Aorta (tissue), 5 donors: ENCODE measurements at regions of chr18 and their contacts with region 1.

Region 1: DNA sequence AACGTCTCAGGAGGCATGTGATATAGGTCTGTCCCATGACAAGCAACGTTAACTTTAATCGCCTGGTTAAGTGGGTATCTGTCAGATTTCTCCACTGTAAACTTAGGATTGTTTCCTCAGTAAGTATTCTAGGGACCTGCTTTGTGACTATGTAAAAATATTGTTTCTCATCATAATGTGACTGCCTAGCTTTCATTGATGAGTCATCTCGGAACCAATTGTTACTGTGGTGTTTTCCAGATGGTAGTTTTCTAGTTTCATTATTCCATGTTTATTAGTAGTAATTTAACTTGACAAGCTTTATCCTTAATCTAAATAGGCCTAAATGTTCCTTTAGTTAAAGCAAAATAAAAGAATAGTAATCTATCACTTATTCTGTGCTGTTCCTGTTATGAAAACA is 28.2 kb upstream of the GATA6 start:
- DNase-seq: no peak
- ATAC-seq: no peak
- H3K4me3 ChIP-seq: no peak overlapping the region
- H3K27ac ChIP-seq: no peak overlapping the region
- H3K4me1 ChIP-seq: no peaks in the 10 kb centered on the region
- H3K27me3 ChIP-seq: no peaks in the 10 kb centered on the region

Region 2: GRCh38 chr18:22098563-22098989 is 42.6 kb before region 1 on chr18:
- intact Hi-C with region 1: loop called in 1 of 2 experiments (anchors 10 kb)
- DNase-seq: no peak
- ATAC-seq: no peak
- H3K4me3 ChIP-seq: no peak overlapping the region
- H3K27ac ChIP-seq: no peak overlapping the region
- H3K4me1 ChIP-seq: no peaks in the 10 kb centered on the region
- H3K27me3 ChIP-seq: no peaks in the 10 kb centered on the region